ENCODE measurements at regions of chr12 and their contacts with region 1.

Region 1: DNA sequence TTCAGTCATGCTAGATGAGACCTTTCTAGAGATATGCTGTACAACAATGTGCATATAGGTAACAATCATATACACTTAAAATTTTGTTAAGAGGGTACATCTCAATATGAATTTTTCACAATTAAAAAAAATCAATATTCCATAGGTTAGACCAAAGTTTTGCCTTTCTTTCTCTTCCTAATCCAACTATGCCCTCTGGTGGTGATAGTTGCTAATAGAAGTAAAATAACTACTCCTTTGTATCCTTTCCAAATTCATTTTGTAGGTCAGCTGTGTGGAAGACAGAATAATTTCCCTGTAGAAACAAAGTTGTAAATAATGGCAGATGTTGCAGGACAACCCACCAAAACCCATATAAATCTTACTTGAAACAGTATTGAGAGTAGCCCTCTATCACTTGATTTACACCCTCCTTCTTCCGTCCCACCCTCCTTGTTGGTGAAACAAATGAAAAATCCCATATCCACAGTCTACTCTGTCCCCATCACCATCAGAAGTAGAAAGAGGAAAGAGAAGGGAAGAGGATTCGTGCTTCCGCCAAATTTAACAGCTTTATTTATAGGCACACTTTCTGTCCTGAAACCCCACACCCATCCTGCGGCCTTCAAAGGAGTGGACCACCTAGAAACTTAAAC is 34.2 kb upstream of the KICS2 start:
- DNase-seq: peak in 3 of 14 experiments; percentile 66 to 71 (median 67)
- ATAC-seq: no peak
- H3K4me3 ChIP-seq: no peak overlapping the region
- H3K4me3 Mint-ChIP-seq: no peak overlapping the region
- H3K27ac ChIP-seq: no peak overlapping the region
- H3K27ac Mint-ChIP-seq: no peak overlapping the region
- H3K4me1 ChIP-seq: no peaks in the 10 kb centered on the region
- H3K4me1 Mint-ChIP-seq: no peaks in the 10 kb centered on the region
- H3K27me3 ChIP-seq: no peaks in the 10 kb centered on the region
- H3K27me3 Mint-ChIP-seq: peaks cover 8% of the 10 kb centered on the region
- CTCF ChIP-seq: peak; percentile 83

Region 2: DNA sequence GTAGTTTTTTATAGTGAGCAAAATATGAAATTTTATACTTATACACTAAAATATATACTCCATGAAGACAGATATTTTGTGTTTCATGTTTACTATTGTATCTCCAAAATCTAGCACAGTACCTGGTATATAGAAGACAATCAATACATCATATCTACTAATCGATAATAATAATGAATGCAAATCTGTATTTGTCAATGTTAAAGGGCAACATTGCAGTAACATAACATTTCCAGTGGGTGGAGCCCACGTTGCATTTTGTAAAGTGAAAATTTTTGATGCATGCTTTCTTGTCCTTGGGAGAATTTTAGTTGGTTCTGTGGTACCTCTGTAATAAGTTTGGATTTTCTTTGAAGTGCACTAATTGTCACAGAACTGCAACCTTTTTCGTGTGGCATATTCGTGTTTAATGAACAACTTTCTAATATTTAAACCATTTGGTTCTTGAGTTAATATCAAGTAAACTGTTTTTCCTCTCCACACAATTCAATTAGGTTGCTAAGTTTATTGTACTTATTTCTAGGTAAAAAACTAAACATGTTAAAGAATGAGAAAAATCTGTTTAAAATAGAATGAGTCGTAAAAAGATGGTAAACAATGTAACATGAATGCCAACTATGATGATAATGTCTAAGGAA is 1152.7 kb before region 1 on chr12:
- CTCF ChIA-PET with region 1: no interaction called
- POLR2A ChIA-PET with region 1: no interaction called
- intact Hi-C with region 1: loop called in 1 of 2 experiments (anchors 2 kb)
- DNase-seq: peak in 4 of 14 experiments; percentile 3 to 29 (median 12)
- ATAC-seq: no peak
- H3K4me3 ChIP-seq: no peak overlapping the region
- H3K4me3 Mint-ChIP-seq: no peak overlapping the region
- H3K27ac ChIP-seq: no peak overlapping the region
- H3K27ac Mint-ChIP-seq: no peak overlapping the region
- H3K4me1 ChIP-seq: no peaks in the 10 kb centered on the region
- H3K4me1 Mint-ChIP-seq: no peaks in the 10 kb centered on the region
- H3K27me3 ChIP-seq: no peaks in the 10 kb centered on the region
- H3K27me3 Mint-ChIP-seq: peaks cover 6% of the 10 kb centered on the region
- CTCF ChIP-seq: peak; percentile 82

Region 3: DNA sequence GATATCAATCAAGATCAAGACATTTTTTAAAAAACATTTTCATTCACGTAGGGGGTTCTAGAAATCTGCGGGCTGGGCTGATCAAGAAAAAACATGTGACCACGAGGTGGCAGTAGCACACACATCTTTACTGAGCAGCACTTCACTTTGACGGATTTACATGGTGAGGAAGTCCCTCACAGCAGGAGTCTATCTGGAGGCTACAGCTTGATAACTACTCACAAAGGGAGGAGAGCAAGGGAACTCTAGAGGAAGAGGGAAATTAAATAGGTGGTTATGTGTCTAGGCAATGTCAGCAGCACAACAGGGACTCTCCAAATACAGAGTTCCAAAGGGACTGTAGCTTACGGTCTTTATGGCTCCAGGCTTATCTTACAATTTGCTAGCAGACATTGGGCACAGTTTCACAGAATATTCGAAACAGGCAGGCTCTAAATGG is 836.1 kb before region 1 on chr12:
- CTCF ChIA-PET with region 1: no interaction called
- POLR2A ChIA-PET with region 1: no interaction called
- intact Hi-C with region 1: loop called (anchors 5 kb)
- DNase-seq: peak in 6 of 14 experiments; percentile 1 to 49 (median 30)
- ATAC-seq: no peak
- H3K4me3 ChIP-seq: no peak overlapping the region
- H3K4me3 Mint-ChIP-seq: no peak overlapping the region
- H3K27ac ChIP-seq: no peak overlapping the region
- H3K27ac Mint-ChIP-seq: no peak overlapping the region
- H3K4me1 ChIP-seq: no peaks in the 10 kb centered on the region
- H3K4me1 Mint-ChIP-seq: no peaks in the 10 kb centered on the region
- H3K27me3 ChIP-seq: no peaks in the 10 kb centered on the region
- H3K27me3 Mint-ChIP-seq: peaks cover 7% of the 10 kb centered on the region
- CTCF ChIP-seq: no peak

Region 4: GRCh38 chr12:63668028-63668799 is 588.1 kb before region 1 on chr12 and contains the start of gene DPY19L2:
- CTCF ChIA-PET with region 1: no interaction called
- POLR2A ChIA-PET with region 1: no interaction called
- intact Hi-C with region 1: loop called in 1 of 2 experiments (anchors 5 kb)
- DNase-seq: peak in 7 of 14 experiments; percentile 8 to 64 (median 40)
- ATAC-seq: no peak
- H3K4me3 ChIP-seq: peak within 1 kb of the TSS; percentile 59
- H3K4me3 Mint-ChIP-seq: peak within 1 kb of the TSS; percentile 51
- H3K27ac ChIP-seq: no peak within 1 kb of the TSS
- H3K27ac Mint-ChIP-seq: no peak within 1 kb of the TSS
- H3K4me1 ChIP-seq: peaks cover 11% of the 10 kb centered on the region
- H3K4me1 Mint-ChIP-seq: peaks cover 7% of the 10 kb centered on the region
- H3K27me3 ChIP-seq: peaks cover 0 to 4% of the 10 kb centered on the region in 2 experiments
- H3K27me3 Mint-ChIP-seq: peaks cover 38% of the 10 kb centered on the region
- CTCF ChIP-seq: no peak
- total RNA-seq, gene DPY19L2: not detected

Region 5: DNA sequence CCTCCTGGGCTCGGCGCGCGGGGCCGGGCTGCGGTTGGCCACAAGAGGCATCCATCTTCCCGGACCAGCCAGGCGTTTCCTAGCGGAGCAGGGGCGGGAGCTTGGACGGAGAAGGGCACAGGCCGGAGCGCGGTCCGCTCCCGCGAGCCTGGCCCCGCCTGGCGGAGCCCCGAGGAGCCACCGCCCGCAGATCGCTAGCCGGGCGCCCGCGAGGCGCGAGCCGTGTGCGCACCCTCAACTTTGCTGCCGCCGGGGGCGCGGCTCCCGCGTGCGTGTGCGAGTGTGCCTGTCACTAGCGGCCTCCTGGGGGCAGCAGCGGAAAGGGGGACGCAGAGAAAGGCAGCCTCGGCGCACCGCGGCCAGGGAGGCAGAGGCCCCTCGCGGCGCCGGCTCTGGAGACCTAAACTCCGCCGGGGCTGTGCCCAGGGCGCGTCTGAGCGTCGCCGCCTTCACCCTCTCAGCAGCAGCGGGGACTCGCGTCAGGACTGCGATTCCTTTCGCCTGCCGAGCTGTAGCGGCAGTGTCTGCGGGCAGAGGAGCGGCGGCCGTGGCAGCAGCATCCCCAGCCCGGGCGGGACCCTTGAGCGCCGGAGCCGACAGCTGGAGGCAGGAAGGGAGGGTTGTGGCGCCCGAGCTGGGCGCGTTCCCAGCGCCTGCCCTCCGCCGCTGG is 412.4 kb before region 1 on chr12:
- CTCF ChIA-PET with region 1: no interaction called
- POLR2A ChIA-PET with region 1: no interaction called
- intact Hi-C with region 1: loop called (anchors 1 kb)
- DNase-seq: peak; percentile 50 to 90 (median 68)
- ATAC-seq: peak; percentile 96
- H3K4me3 ChIP-seq: peak overlapping the region; percentile 50
- H3K4me3 Mint-ChIP-seq: peak overlapping the region; percentile 72
- H3K27ac ChIP-seq: no peak overlapping the region
- H3K27ac Mint-ChIP-seq: no peak overlapping the region
- H3K4me1 ChIP-seq: peaks cover 15% of the 10 kb centered on the region
- H3K4me1 Mint-ChIP-seq: peaks cover 6% of the 10 kb centered on the region
- H3K27me3 ChIP-seq: peaks cover 10 to 24% of the 10 kb centered on the region in 2 experiments
- H3K27me3 Mint-ChIP-seq: peaks cover 29% of the 10 kb centered on the region
- CTCF ChIP-seq: peak; percentile 71

Region 6: DNA sequence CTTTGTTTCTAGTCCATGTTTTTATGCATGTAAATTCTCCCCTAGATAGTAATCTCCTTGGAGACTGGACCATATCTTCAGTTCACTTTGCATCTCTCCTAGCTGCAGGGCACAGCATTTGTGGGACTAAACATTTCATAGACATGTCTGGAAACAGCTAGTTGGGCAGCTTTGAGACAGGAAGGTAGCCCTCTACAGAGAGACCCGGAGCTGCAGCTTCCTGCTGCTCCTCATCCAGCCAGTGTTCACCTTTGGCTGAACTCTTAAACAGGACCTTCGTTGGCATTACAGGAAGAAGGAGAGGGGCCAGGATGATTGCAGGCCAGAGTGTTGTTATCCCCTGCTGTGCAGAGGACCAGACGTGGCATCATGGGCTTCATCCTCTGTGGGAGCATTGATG is 450.0 kb after region 1 on chr12:
- CTCF ChIA-PET with region 1: no interaction called
- POLR2A ChIA-PET with region 1: no interaction called
- intact Hi-C with region 1: no loop called
- DNase-seq: no peak
- ATAC-seq: no peak
- H3K4me3 ChIP-seq: no peak overlapping the region
- H3K4me3 Mint-ChIP-seq: no peak overlapping the region
- H3K27ac ChIP-seq: no peak overlapping the region
- H3K27ac Mint-ChIP-seq: peak overlapping the region; percentile 44
- H3K4me1 ChIP-seq: peaks cover 10% of the 10 kb centered on the region
- H3K4me1 Mint-ChIP-seq: peaks cover 30% of the 10 kb centered on the region
- H3K27me3 ChIP-seq: no peaks in the 10 kb centered on the region
- H3K27me3 Mint-ChIP-seq: no peaks in the 10 kb centered on the region
- CTCF ChIP-seq: no peak

Measured in CD4-positive, alpha-beta T cell (primary cell).